Activated CD4-positive, alpha-beta T cell treated with anti-CD3 and anti-CD28 coated beads, Interleukin-2, amount 10 ng/mL, durations not matched to agents 24 days and 14 days (primary cell): ENCODE measurements at regions of chrX and their contacts with region 1.

Region 1: GRCh38 chrX:63350941-63351616 is at the start of gene SPIN4:
- DNase-seq: peak; percentile 88
- H3K4me3 Mint-ChIP-seq: peak within 1 kb of the TSS; percentile 97
- H3K27ac Mint-ChIP-seq: peak within 1 kb of the TSS; percentile 61
- H3K4me1 Mint-ChIP-seq: peaks cover 15% of the 10 kb centered on the region
- H3K27me3 Mint-ChIP-seq: no peaks in the 10 kb centered on the region
- total RNA-seq, gene SPIN4: 4.9 and 5.3 TPM in 2 replicates

Region 2: GRCh38 chrX:63275127-63275526 is 76.0 kb before region 1 on chrX:
- intact Hi-C with region 1: no loop called
- DNase-seq: peak; percentile 62
- H3K4me3 Mint-ChIP-seq: no peak overlapping the region
- H3K27ac Mint-ChIP-seq: no peak overlapping the region
- H3K4me1 Mint-ChIP-seq: no peaks in the 10 kb centered on the region
- H3K27me3 Mint-ChIP-seq: no peaks in the 10 kb centered on the region

Region 3: DNA sequence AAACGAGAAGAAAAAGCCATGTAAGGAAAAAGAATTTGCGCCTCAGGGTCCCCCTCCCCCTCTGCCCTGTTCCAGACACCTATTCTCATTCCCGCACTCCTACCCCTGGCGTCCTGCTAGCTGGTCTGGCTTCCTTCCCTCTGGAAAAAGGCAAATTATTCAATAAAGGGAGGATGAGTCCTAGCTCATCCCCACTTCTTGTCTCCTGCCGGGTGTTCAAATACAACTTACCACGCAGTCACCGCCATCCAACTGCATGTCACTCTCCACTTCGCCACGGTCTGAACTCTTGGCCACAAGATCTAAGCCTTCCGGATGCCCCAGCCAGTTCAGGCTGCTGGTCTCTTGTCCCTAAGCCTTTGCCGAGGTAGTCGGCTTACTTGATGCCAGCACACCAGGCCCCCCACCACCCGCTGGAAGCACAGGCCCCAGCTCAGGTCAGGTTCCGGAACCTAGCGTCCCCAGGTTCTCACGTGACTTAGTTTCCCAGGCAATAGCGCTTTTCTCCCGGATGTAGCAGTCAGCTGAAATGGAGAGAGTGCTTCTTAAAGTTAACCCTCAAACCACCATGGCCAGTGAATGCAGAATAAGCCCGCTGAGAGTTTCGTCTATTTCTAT is 209.6 kb after region 1 on chrX:
- intact Hi-C with region 1: loop called (anchors 5 kb)
- DNase-seq: peak; percentile 86
- H3K4me3 Mint-ChIP-seq: peak overlapping the region; percentile 92
- H3K27ac Mint-ChIP-seq: peak overlapping the region; percentile 83
- H3K4me1 Mint-ChIP-seq: peaks cover 5% of the 10 kb centered on the region
- H3K27me3 Mint-ChIP-seq: no peaks in the 10 kb centered on the region

Region 4: DNA sequence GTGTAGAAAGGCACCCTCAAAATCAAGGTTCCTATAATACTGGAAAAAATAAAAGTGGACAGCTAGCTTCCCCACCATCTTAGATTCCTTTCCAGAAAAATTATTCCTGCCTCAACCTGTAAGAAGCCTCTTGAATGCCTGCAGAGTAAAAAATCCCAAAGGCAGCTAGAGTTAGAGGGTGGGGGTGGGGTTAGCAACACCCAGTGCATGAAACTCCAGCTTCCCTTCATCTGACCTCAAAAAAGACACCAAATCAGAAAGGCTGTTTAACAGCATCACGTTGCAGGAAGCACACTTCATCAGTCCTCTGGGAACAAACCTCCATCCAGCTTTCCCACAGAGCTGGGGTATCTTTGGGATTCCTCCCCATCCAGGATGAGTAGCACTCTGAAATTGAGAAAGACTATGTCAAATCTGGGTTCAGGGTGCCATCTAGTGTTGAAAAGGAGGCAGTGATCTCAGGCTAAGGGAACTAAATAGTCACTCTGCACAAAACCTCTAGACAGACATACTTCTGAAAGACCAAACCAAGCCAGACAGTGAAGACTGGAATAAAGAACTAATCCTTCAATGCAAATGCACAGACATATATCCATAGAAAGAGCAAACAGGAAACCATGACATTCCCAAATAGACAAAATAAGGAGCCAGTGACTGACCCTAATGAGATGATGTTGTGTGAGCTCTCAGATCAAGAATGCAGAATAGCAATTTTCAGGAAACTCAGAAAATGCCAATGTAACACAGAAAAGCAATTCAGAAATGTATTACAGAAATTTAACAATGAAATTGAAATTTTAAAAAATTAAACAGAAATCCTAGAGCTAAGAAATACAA is 336.0 kb after region 1 on chrX:
- intact Hi-C with region 1: loop called (anchors 10 kb)
- DNase-seq: peak; percentile 68
- H3K4me3 Mint-ChIP-seq: no peak overlapping the region
- H3K27ac Mint-ChIP-seq: no peak overlapping the region
- H3K4me1 Mint-ChIP-seq: no peaks in the 10 kb centered on the region
- H3K27me3 Mint-ChIP-seq: no peaks in the 10 kb centered on the region